Activated CD4-positive, alpha-beta T cell treated with anti-CD3 and anti-CD28 coated beads for 36 hours (primary cell): ENCODE measurements at regions of chr19 and their contacts with region 1.

Region 1: DNA sequence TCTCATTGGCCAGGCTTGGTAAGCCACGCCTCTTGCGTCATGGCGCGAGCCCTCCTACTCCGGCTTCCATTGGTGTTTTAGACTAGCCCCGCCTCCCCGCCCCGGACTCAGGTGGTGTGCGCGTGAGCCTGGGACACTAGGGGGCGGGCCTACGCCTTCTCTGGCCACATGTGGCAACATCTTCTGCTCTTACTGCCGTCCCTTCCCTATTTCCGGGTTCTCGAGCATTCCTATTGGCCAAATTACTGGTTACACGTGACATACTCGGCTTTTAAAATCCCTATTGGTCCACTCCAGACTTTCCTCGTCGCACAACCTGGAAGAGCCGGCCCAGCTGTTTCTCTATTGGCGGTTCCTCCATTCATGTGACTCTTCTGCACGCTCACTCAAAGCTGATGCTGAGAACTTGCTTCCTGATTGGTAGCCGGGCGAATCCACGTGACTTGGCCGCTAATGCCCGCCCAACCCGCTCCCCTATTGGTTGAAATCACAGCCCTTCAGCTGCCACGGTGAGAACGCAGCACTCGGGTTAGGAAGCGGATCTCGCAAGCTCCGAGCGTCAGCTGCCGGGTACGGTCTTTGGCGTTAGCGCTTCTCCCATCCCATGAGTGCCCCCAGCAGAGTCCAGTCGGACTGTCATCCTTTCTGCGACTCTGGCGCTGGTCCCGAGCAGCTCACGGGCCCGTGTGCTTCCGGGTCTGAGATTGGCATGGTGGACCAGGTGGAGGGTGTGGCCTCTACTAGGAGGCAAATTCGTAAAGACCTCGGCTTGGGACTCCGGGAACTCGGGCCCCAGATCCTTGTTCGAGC is at the start of gene BLOC1S3:
- DNase-seq: peak; percentile 100
- ATAC-seq: peak; percentile 90
- H3K4me3 Mint-ChIP-seq: peak within 1 kb of the TSS; percentile 91
- H3K27ac Mint-ChIP-seq: peak within 1 kb of the TSS; percentile 94
- H3K4me1 Mint-ChIP-seq: peaks cover 29% of the 10 kb centered on the region
- H3K27me3 Mint-ChIP-seq: no peaks in the 10 kb centered on the region
- total RNA-seq, gene BLOC1S3: 10.7 to 11.2 TPM

Region 2: GRCh38 chr19:44643605-44644401 is 534.7 kb before region 1 on chr19 and contains the start of gene PVR:
- CTCF ChIA-PET with region 1: no interaction called
- POLR2A ChIA-PET with region 1: no interaction called
- intact Hi-C with region 1: no loop called
- DNase-seq: peak; percentile 68
- ATAC-seq: peak; percentile 83
- H3K4me3 Mint-ChIP-seq: peak within 1 kb of the TSS; percentile 81
- H3K27ac Mint-ChIP-seq: no peak within 1 kb of the TSS
- H3K4me1 Mint-ChIP-seq: peaks cover 4% of the 10 kb centered on the region
- H3K27me3 Mint-ChIP-seq: peaks cover 14% of the 10 kb centered on the region
- total RNA-seq, gene PVR: 10.9 to 11.3 TPM

Region 3: GRCh38 chr19:44770550-44771257 is 407.8 kb before region 1 on chr19:
- CTCF ChIA-PET with region 1: no interaction called
- POLR2A ChIA-PET with region 1: no interaction called
- intact Hi-C with region 1: loop called in 1 of 2 experiments (anchors 2 kb)
- DNase-seq: peak; percentile 99
- ATAC-seq: peak; percentile 100
- H3K4me3 Mint-ChIP-seq: peak overlapping the region; percentile 47
- H3K27ac Mint-ChIP-seq: peak overlapping the region; percentile 77
- H3K4me1 Mint-ChIP-seq: peaks cover 30% of the 10 kb centered on the region
- H3K27me3 Mint-ChIP-seq: no peaks in the 10 kb centered on the region

Region 4: GRCh38 chr19:45001087-45001739 is 177.3 kb before region 1 on chr19 and contains the start of gene RELB:
- CTCF ChIA-PET with region 1: no interaction called
- POLR2A ChIA-PET with region 1: interaction called, 7 read pairs
- intact Hi-C with region 1: loop called (anchors 1 kb)
- DNase-seq: peak; percentile 97
- ATAC-seq: peak; percentile 53
- H3K4me3 Mint-ChIP-seq: peak within 1 kb of the TSS; percentile 94
- H3K27ac Mint-ChIP-seq: peak within 1 kb of the TSS; percentile 97
- H3K4me1 Mint-ChIP-seq: peaks cover 16% of the 10 kb centered on the region
- H3K27me3 Mint-ChIP-seq: no peaks in the 10 kb centered on the region
- total RNA-seq, gene RELB: 43.8 to 51.2 TPM

Region 5: GRCh38 chr19:45152504-45153338 is 25.7 kb before region 1 on chr19:
- CTCF ChIA-PET with region 1: no interaction called
- POLR2A ChIA-PET with region 1: interaction called, 3 read pairs
- intact Hi-C with region 1: loop called in 1 of 2 experiments (anchors 1 kb)
- DNase-seq: peak; percentile 69
- ATAC-seq: peak; percentile 57
- H3K4me3 Mint-ChIP-seq: peak overlapping the region; percentile 42
- H3K27ac Mint-ChIP-seq: peak overlapping the region; percentile 47
- H3K4me1 Mint-ChIP-seq: peaks cover 18% of the 10 kb centered on the region
- H3K27me3 Mint-ChIP-seq: peaks cover 26% of the 10 kb centered on the region

Region 6: GRCh38 chr19:45506246-45506990 is 328.0 kb after region 1 on chr19:
- CTCF ChIA-PET with region 1: no interaction called
- POLR2A ChIA-PET with region 1: no interaction called
- intact Hi-C with region 1: loop called in 1 of 2 experiments (anchors 2 kb)
- DNase-seq: peak; percentile 100
- ATAC-seq: peak; percentile 80
- H3K4me3 Mint-ChIP-seq: peak overlapping the region; percentile 85
- H3K27ac Mint-ChIP-seq: peak overlapping the region; percentile 96
- H3K4me1 Mint-ChIP-seq: peaks cover 38% of the 10 kb centered on the region
- H3K27me3 Mint-ChIP-seq: no peaks in the 10 kb centered on the region

Region 7: GRCh38 chr19:45862564-45863334 is 684.3 kb after region 1 on chr19 and contains the start of gene SYMPK:
- CTCF ChIA-PET with region 1: no interaction called
- POLR2A ChIA-PET with region 1: no interaction called
- intact Hi-C with region 1: loop called in 1 of 2 experiments (anchors 2 kb)
- DNase-seq: peak; percentile 100
- ATAC-seq: peak; percentile 96
- H3K4me3 Mint-ChIP-seq: peak within 1 kb of the TSS; percentile 87
- H3K27ac Mint-ChIP-seq: peak within 1 kb of the TSS; percentile 95
- H3K4me1 Mint-ChIP-seq: peaks cover 31% of the 10 kb centered on the region
- H3K27me3 Mint-ChIP-seq: peaks cover 17% of the 10 kb centered on the region
- total RNA-seq, gene SYMPK: 108 to 128 TPM